ENCODE measurements at regions of chr6 and their contacts with region 1.

Region 1: DNA sequence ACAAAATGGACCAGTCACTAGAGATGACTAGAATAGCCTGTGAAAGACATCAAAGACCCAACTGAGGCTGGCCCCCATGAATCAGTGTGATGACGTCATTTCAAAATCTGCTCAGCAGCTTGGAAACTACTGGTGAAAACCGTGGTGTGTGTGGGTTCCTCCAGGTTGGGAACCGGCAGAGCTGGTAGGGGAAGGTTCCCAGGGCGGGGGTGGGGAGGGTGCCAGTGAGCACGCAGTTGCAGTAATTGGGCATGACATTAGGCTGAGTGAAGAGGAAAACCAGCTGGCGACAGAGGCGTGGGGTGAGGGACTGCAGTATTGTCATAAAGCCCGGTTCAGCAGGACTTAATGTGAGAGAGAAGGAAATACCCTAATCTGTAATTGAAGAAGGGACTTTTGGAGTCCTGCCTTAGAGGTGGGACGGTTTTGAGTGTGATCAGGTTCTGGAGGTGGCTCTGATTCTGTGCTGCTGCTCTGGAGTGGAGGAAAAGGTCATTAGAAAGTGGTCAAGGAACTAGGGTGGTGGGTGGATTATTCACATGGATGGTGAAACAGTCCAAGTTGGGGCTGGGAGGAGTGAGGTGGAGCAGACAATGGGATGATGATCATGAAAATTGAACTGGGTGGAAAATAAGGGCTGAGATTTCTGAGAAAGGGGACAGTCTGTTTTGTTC is 52.0 kb upstream of the MTHFD1L start:
- DNase-seq: peak; percentile 78
- ATAC-seq: peak; percentile 81
- H3K4me3 ChIP-seq: no peak overlapping the region
- H3K27ac ChIP-seq: peak overlapping the region; percentile 79
- H3K4me1 ChIP-seq: peaks cover 19% of the 10 kb centered on the region
- H3K27me3 ChIP-seq: no peaks in the 10 kb centered on the region
- CTCF ChIP-seq: no peak
- EP300 ChIP-seq: peak in 1 of 2 experiments; percentile 16; a peak in 1 of 4 replicates
- POLR2A ChIP-seq: no peak
- RAD21 ChIP-seq: 0 out of 2 replicates have a peak, but pooled peaks have one; percentile 9

Region 2: GRCh38 chr6:150079604-150080003 is 733.9 kb before region 1 on chr6:
- CTCF ChIA-PET with region 1: interaction called, 35 read pairs
- POLR2A ChIA-PET with region 1: no interaction called
- RAD21 ChIA-PET with region 1: interaction called, 5 read pairs
- SMC1A ChIA-PET with region 1: interaction called, 10 read pairs
- in situ Hi-C with region 1: loop called (anchors 5 kb)
- intact Hi-C with region 1: loop called (anchors 1 kb)
- DNase-seq: no peak
- ATAC-seq: peak; percentile 30; the same call in 2 of the 3 replicates
- H3K4me3 ChIP-seq: no peak overlapping the region
- H3K27ac ChIP-seq: no peak overlapping the region
- H3K4me1 ChIP-seq: no peaks in the 10 kb centered on the region
- H3K27me3 ChIP-seq: no peaks in the 10 kb centered on the region; a peak in 1 of 4 replicates
- CTCF ChIP-seq: no peak
- EP300 ChIP-seq: no peak
- POLR2A ChIP-seq: no peak
- RAD21 ChIP-seq: no peak

Region 3: DNA sequence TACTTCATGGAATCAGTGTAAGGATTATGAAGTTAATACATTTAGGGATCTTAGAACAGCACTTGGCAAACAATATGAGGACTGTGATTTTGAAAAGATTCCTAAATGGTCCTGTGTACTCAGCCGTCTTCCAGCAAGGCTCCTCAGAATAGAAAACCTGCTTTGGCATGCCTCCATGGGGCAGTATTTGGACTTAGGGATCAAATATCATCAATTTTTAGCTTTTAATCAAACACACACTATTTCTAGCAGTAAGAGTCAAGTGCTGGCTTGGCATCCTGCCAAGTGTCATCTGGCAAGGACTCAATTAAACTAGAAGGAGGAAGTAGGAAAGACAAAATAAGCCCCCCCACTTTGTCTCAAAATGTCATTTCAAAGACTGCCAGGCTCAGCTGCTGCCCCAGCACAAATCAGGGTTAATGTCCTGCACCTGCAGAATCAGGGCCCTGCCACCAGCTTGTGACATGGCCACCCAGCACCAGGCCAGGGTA is 403.8 kb before region 1 on chr6:
- CTCF ChIA-PET with region 1: interaction called, 11 read pairs
- POLR2A ChIA-PET with region 1: no interaction called
- RAD21 ChIA-PET with region 1: interaction called, 7 read pairs
- SMC1A ChIA-PET with region 1: interaction called, 14 read pairs
- in situ Hi-C with region 1: no loop called
- intact Hi-C with region 1: no loop called
- DNase-seq: no peak
- ATAC-seq: no peak
- H3K4me3 ChIP-seq: no peak overlapping the region
- H3K27ac ChIP-seq: no peak overlapping the region
- H3K4me1 ChIP-seq: no peaks in the 10 kb centered on the region
- H3K27me3 ChIP-seq: no peaks in the 10 kb centered on the region; a peak in 2 of 4 replicates
- CTCF ChIP-seq: no peak
- EP300 ChIP-seq: no peak
- POLR2A ChIP-seq: no peak
- RAD21 ChIP-seq: no peak

Region 4: GRCh38 chr6:150632785-150633485 is 180.5 kb before region 1 on chr6:
- CTCF ChIA-PET with region 1: interaction called, 6 read pairs
- POLR2A ChIA-PET with region 1: interaction called, 6 read pairs
- RAD21 ChIA-PET with region 1: interaction called, 73 read pairs
- SMC1A ChIA-PET with region 1: interaction called, 52 read pairs
- in situ Hi-C with region 1: no loop called
- intact Hi-C with region 1: loop called (anchors 1 kb)
- DNase-seq: peak; percentile 41
- ATAC-seq: peak; percentile 50
- H3K4me3 ChIP-seq: peak overlapping the region; percentile 71
- H3K27ac ChIP-seq: peak overlapping the region; percentile 69
- H3K4me1 ChIP-seq: peaks cover 24% of the 10 kb centered on the region
- H3K27me3 ChIP-seq: no peaks in the 10 kb centered on the region; a peak in 1 of 4 replicates
- CTCF ChIP-seq: no peak
- EP300 ChIP-seq: peak in 1 of 2 experiments; percentile 68; a peak in 1 of 4 replicates
- POLR2A ChIP-seq: peak; percentile 45; the same call in 1 of the 2 replicates
- RAD21 ChIP-seq: no peak

Region 5: DNA sequence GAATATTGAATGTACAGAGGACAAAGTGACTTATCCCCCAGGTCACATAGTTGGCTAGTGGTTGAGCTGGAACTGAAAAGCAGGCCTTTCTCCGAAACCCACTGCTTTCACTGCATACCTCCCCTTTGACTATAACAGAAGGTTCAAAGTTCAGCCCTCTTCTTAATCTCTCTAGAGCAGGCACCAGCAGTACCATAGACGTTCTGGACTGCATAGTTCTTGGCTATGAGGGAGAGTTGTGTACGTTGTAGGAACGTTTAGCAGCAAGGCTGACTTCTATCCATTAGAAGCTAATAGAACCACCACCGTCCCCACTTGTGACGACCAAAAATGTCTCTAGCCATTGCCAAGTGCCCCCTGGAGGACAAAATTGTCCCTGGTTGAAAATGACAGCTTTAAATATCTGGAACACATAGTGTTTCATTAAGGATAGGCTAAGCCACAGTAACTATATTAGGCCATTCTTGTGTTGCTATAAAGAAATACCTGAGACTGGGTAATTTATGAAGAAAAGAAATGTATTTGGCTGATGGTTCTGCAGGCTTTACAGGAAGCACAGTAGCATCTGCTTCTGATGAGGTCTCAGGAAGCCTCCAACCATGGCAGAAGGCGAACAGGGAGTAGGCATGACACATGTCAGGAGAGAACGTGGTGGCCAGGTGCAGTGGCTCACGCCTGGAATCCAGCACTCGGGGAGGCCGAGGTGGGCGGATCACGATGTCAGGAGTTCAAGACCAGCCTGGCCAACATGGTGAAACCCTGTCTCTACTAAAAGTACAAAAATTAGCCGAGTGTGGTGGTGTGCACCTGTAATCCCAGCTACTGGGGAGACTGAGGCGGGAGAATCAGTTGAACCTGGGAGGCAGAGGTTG is 71.6 kb before region 1 on chr6:
- CTCF ChIA-PET with region 1: interaction called, 14 read pairs
- POLR2A ChIA-PET with region 1: no interaction called
- RAD21 ChIA-PET with region 1: interaction called, 5 read pairs
- SMC1A ChIA-PET with region 1: interaction called, 9 read pairs
- in situ Hi-C with region 1: no loop called
- intact Hi-C with region 1: no loop called
- DNase-seq: no peak
- ATAC-seq: peak; percentile 88
- H3K4me3 ChIP-seq: no peak overlapping the region
- H3K27ac ChIP-seq: no peak overlapping the region
- H3K4me1 ChIP-seq: no peaks in the 10 kb centered on the region
- H3K27me3 ChIP-seq: no peaks in the 10 kb centered on the region
- CTCF ChIP-seq: peak; percentile 52 to 61 (median 59); a peak in 5 of 6 replicates
- EP300 ChIP-seq: no peak
- POLR2A ChIP-seq: no peak
- RAD21 ChIP-seq: peak; percentile 85

Region 6: DNA sequence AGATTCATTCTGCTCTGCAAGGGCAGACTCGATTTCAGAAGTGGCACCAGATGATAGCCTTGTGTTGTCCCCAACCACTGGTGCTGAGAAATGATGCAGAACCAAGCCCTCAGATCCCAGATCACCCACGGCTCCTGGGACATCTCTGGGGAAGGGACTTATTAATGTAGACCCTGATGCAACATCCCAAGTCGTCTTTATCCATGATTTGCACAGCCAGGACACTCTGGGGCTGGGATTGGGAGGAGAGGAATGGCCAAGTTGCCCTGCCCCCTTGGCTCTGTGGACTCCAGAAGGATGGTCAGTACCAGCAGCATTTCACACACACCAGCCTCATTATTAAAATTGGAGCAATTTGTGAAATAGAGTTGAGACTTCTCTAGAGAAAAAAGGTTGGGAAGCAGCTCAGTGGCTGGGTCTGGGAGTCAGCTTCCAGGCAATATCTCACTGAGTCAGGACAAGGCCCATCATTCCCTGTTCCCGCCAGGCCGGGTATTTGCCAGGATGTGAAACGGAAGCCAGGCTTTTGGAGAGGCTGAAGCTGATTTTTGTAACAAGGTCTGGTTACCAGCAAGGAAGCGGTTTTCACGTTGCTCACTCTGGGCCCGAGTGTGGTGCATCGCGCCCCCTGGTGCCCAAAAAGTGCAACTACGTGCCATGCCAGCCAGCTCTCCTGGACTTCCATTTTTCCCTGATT is 510.5 kb after region 1 on chr6:
- CTCF ChIA-PET with region 1: interaction called, 65 read pairs
- POLR2A ChIA-PET with region 1: no interaction called
- RAD21 ChIA-PET with region 1: interaction called, 22 read pairs
- SMC1A ChIA-PET with region 1: interaction called, 11 read pairs
- in situ Hi-C with region 1: no loop called
- intact Hi-C with region 1: no loop called
- DNase-seq: peak; percentile 9
- ATAC-seq: peak; percentile 96
- H3K4me3 ChIP-seq: no peak overlapping the region
- H3K27ac ChIP-seq: no peak overlapping the region
- H3K4me1 ChIP-seq: no peaks in the 10 kb centered on the region
- H3K27me3 ChIP-seq: peaks cover 0 to 7% of the 10 kb centered on the region in 2 experiments; a peak in 2 of 4 replicates
- CTCF ChIP-seq: peak; percentile 92 to 98 (median 96)
- EP300 ChIP-seq: 0 out of 4 replicates have a peak, but pooled peaks of 1 of the 2 experiments have one; percentile 18
- POLR2A ChIP-seq: no peak
- RAD21 ChIP-seq: peak; percentile 83

Measured in GM12878 (cell line).